Activated B cell treated with CpG ODN at 0.5 μM for 24 hours (primary cell): ENCODE measurements at regions of chrX and their contacts with region 1.

Region 1: GRCh38 chrX:123818243-123818642 is 41.6 kb upstream of the XIAP start:
- DNase-seq: no peak
- ATAC-seq: no peak
- H3K4me3 Mint-ChIP-seq: no peak overlapping the region
- H3K27ac Mint-ChIP-seq: no peak overlapping the region
- H3K4me1 Mint-ChIP-seq: peaks cover 7% of the 10 kb centered on the region
- H3K27me3 Mint-ChIP-seq: no peaks in the 10 kb centered on the region
- CTCF ChIP-seq: no peak

Region 2: DNA sequence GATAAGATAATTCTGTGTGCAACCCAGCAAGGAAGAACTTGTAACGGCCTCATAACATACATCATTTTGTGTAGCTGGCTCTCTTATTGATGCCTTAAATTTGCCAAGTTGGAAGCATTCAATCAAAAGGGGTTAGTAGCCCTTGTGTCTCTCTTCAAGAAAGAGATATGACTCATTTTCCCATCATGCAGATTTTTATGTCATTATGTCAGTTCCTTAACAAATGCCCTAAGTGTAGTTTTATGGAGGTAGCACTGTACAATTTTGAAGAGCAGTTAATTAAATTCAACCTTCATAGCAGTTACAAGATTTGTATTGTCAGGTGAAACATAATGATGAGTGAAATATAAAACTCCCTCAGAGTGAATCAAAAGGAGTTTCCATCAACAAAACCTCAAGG is 418.5 kb before region 1 on chrX:
- CTCF ChIA-PET with region 1: no interaction called
- POLR2A ChIA-PET with region 1: no interaction called
- intact Hi-C with region 1: no loop called
- DNase-seq: no peak
- ATAC-seq: no peak
- H3K4me3 Mint-ChIP-seq: no peak overlapping the region
- H3K27ac Mint-ChIP-seq: no peak overlapping the region
- H3K4me1 Mint-ChIP-seq: no peaks in the 10 kb centered on the region
- H3K27me3 Mint-ChIP-seq: no peaks in the 10 kb centered on the region
- CTCF ChIP-seq: no peak

Region 3: DNA sequence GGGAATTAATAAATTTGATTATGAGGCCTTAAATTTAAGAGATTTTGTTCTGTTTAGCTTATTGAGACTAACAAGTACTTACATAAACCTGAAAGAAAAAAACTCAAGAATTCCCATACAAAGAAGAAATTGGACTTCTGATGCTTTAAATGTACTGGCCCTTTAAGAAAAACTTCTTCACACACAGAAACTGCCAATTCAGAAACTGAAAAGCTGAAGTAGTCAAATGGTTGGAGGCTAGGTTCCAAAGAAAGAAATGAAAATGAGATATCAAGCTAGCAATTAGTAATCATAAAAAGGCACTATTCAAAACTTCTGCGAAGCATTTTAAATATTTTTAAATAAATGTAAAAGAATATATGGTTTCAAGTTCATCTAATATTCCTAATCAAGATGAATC is 236.7 kb before region 1 on chrX:
- CTCF ChIA-PET with region 1: no interaction called
- POLR2A ChIA-PET with region 1: no interaction called
- intact Hi-C with region 1: no loop called
- DNase-seq: no peak
- ATAC-seq: no peak
- H3K4me3 Mint-ChIP-seq: no peak overlapping the region
- H3K27ac Mint-ChIP-seq: no peak overlapping the region
- H3K4me1 Mint-ChIP-seq: no peaks in the 10 kb centered on the region
- H3K27me3 Mint-ChIP-seq: no peaks in the 10 kb centered on the region
- CTCF ChIP-seq: no peak

Region 4: GRCh38 chrX:123779908-123780396 is 38.3 kb before region 1 on chrX:
- CTCF ChIA-PET with region 1: no interaction called
- POLR2A ChIA-PET with region 1: no interaction called
- intact Hi-C with region 1: loop called (anchors 2 kb)
- DNase-seq: no peak
- ATAC-seq: no peak
- H3K4me3 Mint-ChIP-seq: no peak overlapping the region
- H3K27ac Mint-ChIP-seq: no peak overlapping the region
- H3K4me1 Mint-ChIP-seq: peaks cover 5% of the 10 kb centered on the region
- H3K27me3 Mint-ChIP-seq: no peaks in the 10 kb centered on the region
- CTCF ChIP-seq: no peak